RWPE1 (cell line): ENCODE measurements at regions of chr14 and their contacts with region 1.

Region 1: GRCh38 chr14:72644038-72644437 is 249.9 kb downstream of the DPF3 start:
- DNase-seq: no peak
- H3K27ac ChIP-seq: no peak overlapping the region; the same call in 1 of the 2 replicates
- CTCF ChIP-seq: no peak

Region 2: DNA sequence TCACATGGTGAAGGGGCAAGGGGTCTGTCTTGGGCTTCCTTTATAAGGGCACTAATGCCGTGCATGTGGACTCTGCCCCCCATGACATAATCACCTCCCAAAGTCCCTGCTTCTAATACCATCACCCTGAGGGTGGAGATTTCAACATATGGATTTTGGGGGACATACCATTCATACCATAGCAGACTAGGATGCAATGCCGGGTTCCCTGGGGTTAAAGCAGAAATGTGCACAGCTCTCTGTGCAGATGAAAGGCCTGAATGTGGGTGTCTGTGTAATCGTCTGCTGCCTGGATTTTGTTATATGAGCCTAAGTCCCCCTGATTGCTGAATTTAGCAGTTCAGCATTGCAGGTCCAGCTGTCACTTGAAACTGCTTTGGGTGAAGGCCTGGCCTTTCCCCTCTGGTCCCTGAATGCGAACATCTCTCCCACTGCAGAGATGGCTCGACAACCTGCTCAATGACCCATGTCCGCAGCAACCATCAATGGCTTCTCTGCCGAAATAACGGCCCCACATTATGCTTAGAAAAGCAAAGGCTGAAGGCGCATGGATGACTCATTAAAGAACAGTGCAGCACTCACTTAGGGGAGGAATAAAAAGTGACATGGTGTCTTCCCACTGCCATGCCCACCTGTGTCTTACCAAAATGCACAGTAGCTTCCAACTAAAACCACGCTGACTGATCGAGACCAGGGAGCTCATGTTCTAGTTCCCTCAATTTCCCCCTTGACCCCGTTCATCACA is 36.5 kb before region 1 on chr14:
- CTCF ChIA-PET with region 1: no interaction called
- POLR2A ChIA-PET with region 1: no interaction called
- DNase-seq: no peak
- H3K27ac ChIP-seq: no peak overlapping the region
- CTCF ChIP-seq: no peak

Region 3: DNA sequence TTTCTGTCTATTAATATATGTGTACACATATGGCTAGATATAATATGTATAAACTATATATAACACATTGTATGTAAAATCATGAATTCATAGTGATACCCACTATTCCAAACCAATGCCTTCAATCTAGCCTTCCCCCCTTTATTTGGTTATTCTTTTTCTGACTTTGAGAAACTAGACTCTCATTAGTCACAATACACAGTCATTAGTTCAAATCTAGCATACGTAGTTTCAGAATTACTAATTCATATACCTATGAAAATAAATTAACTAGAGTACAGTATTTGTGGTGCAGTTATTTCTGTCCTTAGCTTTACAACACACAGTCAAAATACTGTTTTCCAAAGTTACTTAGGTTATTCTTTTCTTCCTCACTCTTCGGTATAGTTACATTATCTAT is 18.3 kb before region 1 on chr14:
- CTCF ChIA-PET with region 1: interaction called, 10 read pairs
- POLR2A ChIA-PET with region 1: no interaction called
- DNase-seq: no peak
- H3K27ac ChIP-seq: no peak overlapping the region
- CTCF ChIP-seq: no peak

Region 4: GRCh38 chr14:73311708-73312030 is 667.6 kb after region 1 on chr14:
- CTCF ChIA-PET with region 1: no interaction called
- POLR2A ChIA-PET with region 1: no interaction called
- DNase-seq: no peak
- H3K27ac ChIP-seq: no peak overlapping the region
- CTCF ChIP-seq: no peak